GM13976 (cell line): ENCODE measurements at regions of chr12 and their contacts with region 1.

Region 1: GRCh38 chr12:96516472-96517430 is 27.4 kb downstream of the CFAP54 start:
- DNase-seq: peak; percentile 65
- CTCF ChIP-seq: peak; percentile 53

Region 2: GRCh38 chr12:95805864-95806671 is 710.7 kb before region 1 on chr12:
- in situ Hi-C with region 1: no loop called
- DNase-seq: no peak
- CTCF ChIP-seq: no peak

Region 3: GRCh38 chr12:96061864-96062453 is 454.8 kb before region 1 on chr12:
- in situ Hi-C with region 1: loop called (anchors 10 kb)
- DNase-seq: peak; percentile 79
- CTCF ChIP-seq: peak; percentile 75

Region 4: GRCh38 chr12:96219698-96220206 is 297.0 kb before region 1 on chr12:
- in situ Hi-C with region 1: loop called (anchors 25 kb)
- DNase-seq: no peak
- CTCF ChIP-seq: no peak

Region 5: GRCh38 chr12:96399919-96400797 is 116.6 kb before region 1 on chr12 and contains the start of gene CDK17:
- in situ Hi-C with region 1: loop called (anchors 10 kb)
- DNase-seq: peak; percentile 89
- CTCF ChIP-seq: peak; percentile 48